ENCODE measurements at regions of chr11 and their contacts with region 1.

Region 1: DNA sequence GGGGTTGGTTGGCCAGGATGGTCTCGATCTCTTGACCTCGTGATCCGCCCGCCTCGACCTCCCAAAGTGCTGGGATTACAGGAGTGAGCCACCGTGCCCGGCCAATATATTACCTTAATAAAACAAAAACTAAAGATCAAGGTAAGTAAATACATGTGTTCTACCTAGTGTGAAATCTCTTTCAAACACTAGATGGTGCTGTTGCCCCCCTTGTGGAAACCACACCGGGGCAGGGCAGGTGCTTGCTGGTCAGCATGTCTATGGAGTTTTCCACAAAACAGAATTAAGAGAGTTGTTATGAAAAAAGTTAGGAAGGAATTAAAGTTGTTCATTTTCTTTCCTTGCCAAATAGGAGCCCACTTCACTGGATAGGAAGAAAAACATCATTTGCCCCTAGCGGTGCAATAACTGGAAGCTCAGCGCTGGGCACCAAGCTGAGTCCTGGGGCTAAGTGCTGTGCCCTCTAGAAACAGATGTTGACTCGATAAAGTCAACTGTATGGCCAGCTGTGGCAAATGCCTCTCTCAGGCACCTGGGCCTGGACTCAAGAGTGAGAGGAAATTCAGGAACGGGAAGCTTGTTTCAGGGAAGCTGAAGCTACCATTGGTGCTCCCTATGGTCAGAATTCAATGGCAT is 6.3 kb upstream of the KCNJ5 start:
- DNase-seq: peak; percentile 79
- H3K4me3 Mint-ChIP-seq: no peak overlapping the region
- H3K27ac Mint-ChIP-seq: no peak overlapping the region
- H3K4me1 Mint-ChIP-seq: peaks cover 15% of the 10 kb centered on the region
- H3K27me3 Mint-ChIP-seq: peaks cover 19% of the 10 kb centered on the region
- CTCF ChIP-seq: peak; percentile 87

Region 2: DNA sequence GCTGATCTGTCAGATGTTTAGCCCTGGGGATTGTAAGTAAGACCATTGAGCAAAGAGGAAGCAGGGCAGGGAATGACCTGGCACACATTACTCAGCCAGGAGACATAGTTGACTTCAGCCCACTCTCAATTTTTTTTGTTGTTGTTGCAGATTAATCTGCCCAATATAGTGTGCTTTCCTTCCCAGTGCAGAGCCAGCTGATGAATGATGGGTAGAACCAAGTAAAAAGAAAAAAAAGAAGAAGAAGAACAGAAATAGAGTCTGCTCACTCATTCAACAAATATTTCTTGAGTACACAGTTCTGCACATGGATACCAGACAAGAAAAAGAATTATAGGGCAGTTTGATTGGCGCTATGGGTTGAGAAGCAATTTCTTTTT is 590.2 kb before region 1 on chr11:
- CTCF ChIA-PET with region 1: no interaction called
- POLR2A ChIA-PET with region 1: no interaction called
- intact Hi-C with region 1: no loop called
- DNase-seq: no peak
- H3K4me3 Mint-ChIP-seq: no peak overlapping the region
- H3K27ac Mint-ChIP-seq: no peak overlapping the region
- H3K4me1 Mint-ChIP-seq: peaks cover 6% of the 10 kb centered on the region
- H3K27me3 Mint-ChIP-seq: no peaks in the 10 kb centered on the region
- CTCF ChIP-seq: no peak

Region 3: DNA sequence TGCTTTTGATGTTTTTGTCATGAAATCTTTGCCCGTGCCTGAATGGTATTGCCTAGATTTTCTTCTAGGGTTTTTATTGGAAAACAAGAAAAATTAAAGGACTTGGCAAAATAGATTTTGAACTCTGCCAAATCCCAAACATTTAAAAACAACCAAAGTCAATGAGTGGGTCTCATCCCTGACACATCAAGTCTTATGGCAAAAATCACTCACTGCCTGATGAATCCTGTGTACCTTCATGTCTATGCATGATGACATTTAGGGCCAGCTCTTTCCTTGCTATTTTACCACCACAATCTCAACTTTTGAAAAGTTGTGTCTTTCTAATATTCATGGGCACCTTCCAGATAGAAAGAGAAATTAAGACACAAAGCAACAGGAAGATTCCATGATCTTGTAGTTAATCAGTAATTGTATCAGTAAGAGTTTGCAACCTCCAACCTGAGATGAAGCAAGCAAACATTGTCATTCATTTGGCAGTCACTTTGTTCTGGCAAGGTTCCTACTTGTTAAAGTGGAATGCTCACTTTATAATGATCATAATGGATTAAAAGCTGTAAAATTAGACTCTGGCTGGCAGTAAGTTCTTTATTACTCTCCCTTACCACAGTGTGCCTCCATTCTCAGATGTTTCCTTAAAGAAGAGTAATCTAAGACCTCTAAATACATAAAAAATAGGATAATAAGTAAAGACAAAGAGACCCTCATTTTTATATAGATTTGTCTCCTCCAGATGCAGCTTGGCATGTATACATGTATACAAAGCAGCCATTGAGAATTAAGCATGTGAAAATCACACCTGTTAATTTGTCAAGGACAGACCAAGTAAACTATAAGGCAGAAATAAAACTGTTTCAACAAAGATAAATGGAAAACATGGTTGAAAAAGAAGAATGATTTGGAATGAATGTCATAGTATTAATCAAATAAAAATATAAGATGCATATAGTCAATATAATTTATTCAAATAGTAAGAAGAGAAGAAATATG is 349.1 kb before region 1 on chr11:
- CTCF ChIA-PET with region 1: no interaction called
- POLR2A ChIA-PET with region 1: no interaction called
- intact Hi-C with region 1: no loop called
- DNase-seq: no peak
- H3K4me3 Mint-ChIP-seq: no peak overlapping the region
- H3K27ac Mint-ChIP-seq: no peak overlapping the region
- H3K4me1 Mint-ChIP-seq: peaks cover 19% of the 10 kb centered on the region
- H3K27me3 Mint-ChIP-seq: peaks cover 14% of the 10 kb centered on the region
- CTCF ChIP-seq: no peak

Region 4: GRCh38 chr11:128905345-128906184 is 20.7 kb after region 1 on chr11:
- CTCF ChIA-PET with region 1: interaction called, 68 read pairs
- POLR2A ChIA-PET with region 1: interaction called, 9 read pairs
- intact Hi-C with region 1: loop called (anchors 1 kb)
- DNase-seq: peak; percentile 71
- H3K4me3 Mint-ChIP-seq: peak overlapping the region; percentile 72
- H3K27ac Mint-ChIP-seq: peak overlapping the region; percentile 57
- H3K4me1 Mint-ChIP-seq: peaks cover 48% of the 10 kb centered on the region
- H3K27me3 Mint-ChIP-seq: no peaks in the 10 kb centered on the region
- CTCF ChIP-seq: peak; percentile 43

Region 5: GRCh38 chr11:128933481-128934178 is 48.8 kb after region 1 on chr11:
- CTCF ChIA-PET with region 1: interaction called, 598 read pairs
- POLR2A ChIA-PET with region 1: no interaction called
- intact Hi-C with region 1: no loop called
- DNase-seq: no peak
- H3K4me3 Mint-ChIP-seq: no peak overlapping the region
- H3K27ac Mint-ChIP-seq: no peak overlapping the region
- H3K4me1 Mint-ChIP-seq: no peaks in the 10 kb centered on the region
- H3K27me3 Mint-ChIP-seq: no peaks in the 10 kb centered on the region
- CTCF ChIP-seq: no peak

Region 6: DNA sequence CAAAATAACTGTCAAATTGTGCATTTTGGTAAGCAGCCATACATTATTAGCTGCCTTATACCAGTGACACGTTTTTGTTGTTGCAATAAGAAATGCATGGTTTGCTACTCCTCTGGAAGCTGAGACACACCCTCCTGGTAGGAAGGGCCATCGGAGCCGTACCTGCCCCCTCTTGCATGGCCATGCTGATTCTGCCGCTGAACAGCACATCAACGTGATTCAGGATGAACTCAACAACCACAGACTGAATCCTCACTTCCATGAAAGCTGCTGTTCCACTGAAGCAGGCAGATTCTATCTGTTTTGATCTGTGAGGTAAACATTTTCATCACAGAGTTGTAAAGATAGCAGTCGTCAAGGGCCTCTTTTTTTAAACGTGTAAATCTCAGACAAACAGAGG is 96.4 kb after region 1 on chr11:
- CTCF ChIA-PET with region 1: interaction called, 11 read pairs
- POLR2A ChIA-PET with region 1: no interaction called
- intact Hi-C with region 1: no loop called
- DNase-seq: peak; percentile 8
- H3K4me3 Mint-ChIP-seq: no peak overlapping the region
- H3K27ac Mint-ChIP-seq: no peak overlapping the region
- H3K4me1 Mint-ChIP-seq: no peaks in the 10 kb centered on the region
- H3K27me3 Mint-ChIP-seq: no peaks in the 10 kb centered on the region
- CTCF ChIP-seq: no peak

Region 7: GRCh38 chr11:129331871-129332274 is 447.1 kb after region 1 on chr11:
- CTCF ChIA-PET with region 1: interaction called, 19 read pairs
- POLR2A ChIA-PET with region 1: no interaction called
- intact Hi-C with region 1: loop called (anchors 1 kb)
- DNase-seq: peak; percentile 88
- H3K4me3 Mint-ChIP-seq: no peak overlapping the region
- H3K27ac Mint-ChIP-seq: peak overlapping the region; percentile 25
- H3K4me1 Mint-ChIP-seq: peaks cover 12% of the 10 kb centered on the region
- H3K27me3 Mint-ChIP-seq: no peaks in the 10 kb centered on the region
- CTCF ChIP-seq: peak; percentile 78

Region 8: DNA sequence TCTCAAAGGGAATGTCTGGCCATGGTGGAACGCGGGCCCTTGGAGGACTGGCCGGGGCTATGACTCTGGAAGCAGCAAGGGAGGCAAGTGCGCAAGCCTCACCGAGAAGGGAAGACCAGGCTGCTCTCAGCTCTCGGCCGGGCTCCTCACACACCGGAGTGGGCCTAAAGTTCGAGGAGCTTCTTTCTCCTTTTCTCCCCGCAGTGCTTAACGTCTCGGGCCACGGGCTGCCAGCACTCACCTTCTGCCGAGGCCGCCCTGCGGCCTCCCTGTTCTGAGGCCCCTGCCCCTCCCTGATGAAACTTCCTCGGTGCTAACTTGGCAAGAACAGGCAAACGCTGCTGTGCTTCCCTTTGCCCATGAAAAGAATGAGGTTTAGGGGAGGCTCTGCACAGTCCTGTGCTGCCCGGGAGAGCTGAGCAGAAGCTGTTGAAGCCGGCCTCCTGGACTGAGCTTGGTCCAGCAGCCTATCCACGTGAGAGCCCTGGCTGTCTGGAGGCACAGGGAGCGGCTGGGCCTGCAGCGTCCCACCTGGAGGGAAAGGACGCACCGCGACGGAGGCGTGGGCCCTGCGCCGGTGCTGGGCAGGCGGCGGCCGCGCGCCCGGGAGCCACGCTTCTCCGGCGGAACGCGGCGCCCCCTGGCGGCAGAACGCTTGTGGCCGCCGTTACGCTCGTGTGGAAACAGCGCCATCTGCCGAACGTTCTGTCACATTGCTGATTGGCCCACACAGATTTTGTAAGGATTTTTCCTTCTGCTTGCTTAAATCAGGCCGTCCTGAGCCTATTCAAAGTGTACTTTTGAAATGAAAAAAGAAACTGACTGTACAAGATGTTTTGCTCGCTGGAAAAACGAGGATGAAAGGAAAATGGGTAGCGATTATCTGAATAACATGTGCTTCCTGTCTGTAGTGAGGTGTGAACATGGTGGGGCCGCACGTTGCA is 865.8 kb after region 1 on chr11:
- CTCF ChIA-PET with region 1: interaction called, 3 read pairs
- POLR2A ChIA-PET with region 1: no interaction called
- intact Hi-C with region 1: loop called (anchors 10 kb)
- DNase-seq: peak; percentile 72
- H3K4me3 Mint-ChIP-seq: no peak overlapping the region
- H3K27ac Mint-ChIP-seq: no peak overlapping the region
- H3K4me1 Mint-ChIP-seq: no peaks in the 10 kb centered on the region
- H3K27me3 Mint-ChIP-seq: peaks cover 13% of the 10 kb centered on the region
- CTCF ChIP-seq: peak; percentile 100